ENCODE measurements at regions of chr2 and their contacts with region 1.

Region 1: GRCh38 chr2:69643602-69644505 is at the start of gene AAK1:
- DNase-seq: peak; percentile 87
- H3K4me3 ChIP-seq: peak within 1 kb of the TSS; percentile 92 to 96 (median 95)
- H3K27ac ChIP-seq: peak within 1 kb of the TSS; percentile 81
- H3K4me1 ChIP-seq: peaks cover 35% of the 10 kb centered on the region
- H3K27me3 ChIP-seq: no peaks in the 10 kb centered on the region
- CTCF ChIP-seq: no peak
- total RNA-seq, gene AAK1: 86.2 to 97.0 TPM

Region 2: GRCh38 chr2:69559442-69560146 is 84.3 kb before region 1 on chr2:
- CTCF ChIA-PET with region 1: no interaction called
- dilution Hi-C with region 1: loop called (anchors 5 kb)
- in situ Hi-C with region 1: no loop called
- intact Hi-C with region 1: loop called (anchors 1 kb)
- DNase-seq: peak; percentile 51
- H3K4me3 ChIP-seq: no peak overlapping the region
- H3K27ac ChIP-seq: no peak overlapping the region
- H3K4me1 ChIP-seq: peaks cover 8% of the 10 kb centered on the region
- H3K27me3 ChIP-seq: no peaks in the 10 kb centered on the region
- CTCF ChIP-seq: peak; percentile 76 to 84

Region 3: DNA sequence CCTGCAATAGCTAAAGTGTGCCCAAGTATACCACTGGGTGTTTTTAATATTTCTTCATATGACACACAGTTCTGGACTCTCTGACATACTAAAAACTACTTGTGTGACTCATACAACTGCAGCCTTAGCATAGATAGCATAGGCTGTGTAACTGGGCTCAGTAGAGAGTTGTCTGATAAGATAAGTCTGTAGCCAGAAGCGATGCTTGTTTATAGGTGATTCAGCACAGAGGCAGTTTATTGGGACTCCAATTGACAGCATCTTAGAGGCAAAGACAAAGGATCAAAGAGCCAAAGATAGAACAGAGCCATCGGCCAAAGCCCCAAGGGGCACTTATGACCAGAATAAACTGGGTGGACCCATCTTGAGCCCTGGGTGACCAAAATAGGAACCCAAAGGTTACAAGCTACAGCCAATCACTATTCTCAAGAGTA is 42.7 kb before region 1 on chr2:
- CTCF ChIA-PET with region 1: no interaction called
- dilution Hi-C with region 1: loop called (anchors 5 kb)
- in situ Hi-C with region 1: no loop called
- intact Hi-C with region 1: no loop called
- DNase-seq: peak; percentile 73
- H3K4me3 ChIP-seq: no peak overlapping the region
- H3K27ac ChIP-seq: no peak overlapping the region
- H3K4me1 ChIP-seq: peaks cover 2% of the 10 kb centered on the region
- H3K27me3 ChIP-seq: no peaks in the 10 kb centered on the region
- CTCF ChIP-seq: no peak

Region 4: GRCh38 chr2:69689969-69690368 is 46.1 kb after region 1 on chr2:
- CTCF ChIA-PET with region 1: no interaction called
- dilution Hi-C with region 1: no loop called
- in situ Hi-C with region 1: no loop called
- intact Hi-C with region 1: no loop called
- DNase-seq: no peak
- H3K4me3 ChIP-seq: no peak overlapping the region
- H3K27ac ChIP-seq: no peak overlapping the region
- H3K4me1 ChIP-seq: peaks cover 12% of the 10 kb centered on the region
- H3K27me3 ChIP-seq: no peaks in the 10 kb centered on the region
- CTCF ChIP-seq: no peak

Region 5: DNA sequence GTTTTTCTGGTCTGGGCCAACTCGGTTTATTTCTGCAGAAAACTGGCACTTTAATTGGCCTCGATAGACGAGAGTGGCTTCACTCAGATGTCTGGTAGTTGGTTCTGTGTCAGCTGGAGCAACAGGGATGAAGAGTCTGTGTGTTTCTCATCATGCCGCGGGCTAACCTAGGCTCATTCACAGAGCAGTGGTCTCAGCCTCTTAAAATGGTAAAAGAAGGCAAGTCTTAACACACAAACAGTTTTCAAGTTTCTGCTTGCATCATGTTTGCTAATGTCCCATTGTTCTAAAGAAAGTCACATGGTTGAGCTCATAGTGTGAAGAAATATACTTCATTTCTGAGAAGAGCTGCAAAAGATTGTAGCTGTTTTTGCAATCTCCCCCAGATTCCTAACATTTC is 60.6 kb after region 1 on chr2:
- CTCF ChIA-PET with region 1: no interaction called
- dilution Hi-C with region 1: no loop called
- in situ Hi-C with region 1: no loop called
- intact Hi-C with region 1: loop called (anchors 2 kb)
- DNase-seq: peak; percentile 96
- H3K4me3 ChIP-seq: peak overlapping the region in 1 of 3 experiments; percentile 27
- H3K27ac ChIP-seq: peak overlapping the region; percentile 72
- H3K4me1 ChIP-seq: peaks cover 27% of the 10 kb centered on the region
- H3K27me3 ChIP-seq: no peaks in the 10 kb centered on the region
- CTCF ChIP-seq: no peak

Region 6: GRCh38 chr2:70115646-70116442 is 472.0 kb after region 1 on chr2:
- CTCF ChIA-PET with region 1: no interaction called
- dilution Hi-C with region 1: no loop called
- in situ Hi-C with region 1: no loop called
- intact Hi-C with region 1: no loop called
- DNase-seq: no peak
- H3K4me3 ChIP-seq: no peak overlapping the region
- H3K27ac ChIP-seq: no peak overlapping the region
- H3K4me1 ChIP-seq: peaks cover 4% of the 10 kb centered on the region
- H3K27me3 ChIP-seq: no peaks in the 10 kb centered on the region
- CTCF ChIP-seq: no peak

Region 7: GRCh38 chr2:70270323-70270722 is 626.5 kb after region 1 on chr2:
- CTCF ChIA-PET with region 1: no interaction called
- dilution Hi-C with region 1: no loop called
- in situ Hi-C with region 1: no loop called
- intact Hi-C with region 1: no loop called
- DNase-seq: no peak
- H3K4me3 ChIP-seq: no peak overlapping the region
- H3K27ac ChIP-seq: no peak overlapping the region
- H3K4me1 ChIP-seq: no peaks in the 10 kb centered on the region
- H3K27me3 ChIP-seq: no peaks in the 10 kb centered on the region
- CTCF ChIP-seq: no peak

Measured in mammary epithelial cell (primary cell).